RWPE1 (cell line): ENCODE measurements at regions of chr2 and their contacts with region 1.

Region 1: GRCh38 chr2:99818842-99819241 is 323.5 kb downstream of the AFF3 start:
- DNase-seq: peak; percentile 52
- H3K27ac ChIP-seq: no peak overlapping the region
- CTCF ChIP-seq: no peak

Region 2: DNA sequence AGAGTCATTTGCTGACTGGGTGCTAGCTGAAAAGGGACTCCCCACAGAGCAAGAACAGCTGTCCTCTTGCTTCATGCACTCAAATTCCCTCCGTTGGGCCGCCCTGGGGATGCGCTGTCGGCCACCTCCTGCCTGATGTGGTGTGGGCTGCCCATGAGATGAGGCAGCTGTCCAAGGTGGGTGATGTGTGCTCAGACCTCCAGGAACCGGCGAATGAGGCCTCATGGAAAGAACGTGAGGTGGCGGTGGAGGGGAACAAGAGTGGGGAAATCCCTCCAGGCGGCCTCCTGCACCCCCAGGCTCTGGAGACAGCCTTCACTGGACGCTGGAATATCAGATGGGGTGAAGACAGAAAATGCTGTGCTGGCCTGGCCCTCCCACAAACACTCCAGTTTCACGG is 423.6 kb after region 1 on chr2:
- CTCF ChIA-PET with region 1: interaction called, 13 read pairs
- POLR2A ChIA-PET with region 1: no interaction called
- DNase-seq: no peak
- H3K27ac ChIP-seq: no peak overlapping the region
- CTCF ChIP-seq: no peak